ENCODE measurements at regions of chr11 and their contacts with region 1.

Region 1: DNA sequence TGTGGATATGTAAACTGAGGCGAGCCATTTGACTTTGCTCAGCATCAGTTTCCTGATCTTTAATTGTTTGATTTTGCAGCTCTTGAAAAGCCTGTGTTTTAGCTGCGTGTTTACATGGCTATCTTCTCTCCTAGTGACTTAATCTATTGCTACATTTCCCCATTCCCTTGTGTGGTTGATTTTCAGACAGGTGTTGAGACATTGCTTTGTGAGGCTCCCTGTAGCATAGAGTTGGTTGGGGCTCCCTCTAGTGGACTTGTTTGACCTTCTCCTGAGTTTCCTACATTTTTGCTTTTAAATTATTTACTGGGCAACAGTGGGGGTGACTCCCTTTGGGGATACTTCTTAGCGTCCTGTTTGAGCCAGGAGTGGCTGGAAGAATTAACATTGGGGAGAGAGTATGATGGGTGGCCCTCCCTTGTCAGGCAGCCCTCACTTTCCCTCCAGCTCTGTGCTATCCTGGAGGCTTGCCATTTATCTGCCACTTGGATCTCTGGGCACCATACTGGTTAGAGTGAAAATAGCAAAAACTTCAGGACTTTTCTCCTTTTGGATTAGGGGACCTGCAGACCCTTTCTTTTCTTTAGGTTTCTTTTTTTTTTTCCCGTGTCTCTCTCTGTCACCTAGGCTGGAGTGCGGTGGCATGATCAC is 9.2 kb upstream of the CBL start:
- DNase-seq: peak; percentile 76 to 82
- H3K4me3 ChIP-seq: no peak overlapping the region
- H3K4me1 ChIP-seq: no peaks in the 10 kb centered on the region
- H3K27me3 ChIP-seq: no peaks in the 10 kb centered on the region

Region 2: DNA sequence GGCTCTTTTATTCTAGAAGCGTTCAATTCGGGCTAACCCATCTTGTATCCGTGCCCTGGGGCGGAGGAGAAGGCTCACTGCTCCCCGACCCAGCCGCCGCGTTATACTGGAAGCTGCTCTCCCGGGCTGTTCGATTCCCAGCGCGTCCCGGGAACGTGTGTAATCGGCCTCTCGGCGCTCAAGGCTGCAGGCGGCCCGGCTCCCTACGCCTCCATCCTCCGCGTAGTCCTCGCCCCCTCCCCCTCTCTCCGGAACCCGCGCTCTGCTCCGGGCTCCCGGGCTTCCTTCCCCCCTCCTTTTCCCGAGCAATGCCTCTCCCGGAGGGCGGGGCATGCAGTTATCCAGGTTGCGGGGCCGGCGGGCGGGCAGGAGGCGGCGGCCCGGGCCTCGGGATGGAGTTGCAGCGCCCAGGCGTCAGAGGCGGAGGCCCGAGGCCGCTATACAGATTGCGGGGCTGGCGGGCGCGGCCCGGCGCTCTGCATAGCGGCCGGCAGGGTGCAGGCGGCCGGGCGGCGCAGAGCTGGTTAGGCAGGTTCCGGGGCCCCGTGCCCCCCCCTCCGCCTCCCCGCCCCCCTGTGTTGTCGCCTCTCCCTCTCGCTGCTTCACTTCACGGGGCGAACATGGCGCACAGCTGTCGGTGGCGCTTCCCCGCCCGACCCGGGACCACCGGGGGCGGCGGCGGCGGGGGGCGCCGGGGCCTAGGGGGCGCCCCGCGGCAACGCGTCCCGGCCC is 760.9 kb before region 1 on chr11 and contains the start of gene KMT2A:
- in situ Hi-C with region 1: no loop called
- DNase-seq: peak; percentile 94 to 100
- H3K4me3 ChIP-seq: peak within 1 kb of the TSS; percentile 80
- H3K4me1 ChIP-seq: peaks cover 26% of the 10 kb centered on the region
- H3K27me3 ChIP-seq: no peaks in the 10 kb centered on the region

Region 3: GRCh38 chr11:119091178-119091577 is 105.8 kb before region 1 on chr11:
- in situ Hi-C with region 1: no loop called
- DNase-seq: no peak
- H3K4me3 ChIP-seq: no peak overlapping the region
- H3K4me1 ChIP-seq: peaks cover 16% of the 10 kb centered on the region
- H3K27me3 ChIP-seq: no peaks in the 10 kb centered on the region

Region 4: DNA sequence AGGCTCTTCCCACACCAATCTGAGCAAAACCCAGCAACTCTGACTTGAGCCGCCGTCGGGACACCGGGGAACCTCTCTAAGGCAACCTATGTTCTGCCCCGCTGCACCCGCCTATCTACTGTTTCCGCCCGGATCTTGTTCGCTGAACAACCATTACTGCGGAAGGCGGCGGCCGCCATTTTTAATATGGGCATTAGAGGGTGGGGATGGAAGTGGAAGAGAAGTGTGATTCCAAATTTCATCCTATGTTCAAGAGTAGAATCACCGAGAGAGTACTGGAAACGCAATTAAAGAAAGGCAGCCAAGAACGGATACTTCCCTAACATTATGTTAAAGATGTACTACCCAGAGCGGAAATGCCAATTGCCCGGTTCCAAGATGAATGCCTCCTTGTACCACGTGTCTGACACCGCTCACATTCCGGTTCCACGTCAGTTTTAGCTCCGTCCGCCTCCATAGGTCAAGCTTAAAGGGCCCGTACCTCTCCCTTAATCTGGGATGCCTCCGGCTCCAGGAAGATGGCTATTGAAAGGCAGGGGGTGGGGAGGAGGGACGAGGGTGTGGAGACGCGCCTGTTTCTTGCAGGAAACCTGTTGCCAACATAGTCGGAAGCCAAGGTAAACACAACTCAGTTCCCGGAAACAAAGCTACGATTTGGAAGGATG is 95.1 kb before region 1 on chr11 and contains the start of gene DPAGT1:
- in situ Hi-C with region 1: loop called (anchors 5 kb)
- DNase-seq: peak; percentile 95 to 97
- H3K4me3 ChIP-seq: peak within 1 kb of the TSS; percentile 71
- H3K4me1 ChIP-seq: peaks cover 23% of the 10 kb centered on the region
- H3K27me3 ChIP-seq: no peaks in the 10 kb centered on the region